ENCODE measurements at regions of chr11 and their contacts with region 1.

Region 1: DNA sequence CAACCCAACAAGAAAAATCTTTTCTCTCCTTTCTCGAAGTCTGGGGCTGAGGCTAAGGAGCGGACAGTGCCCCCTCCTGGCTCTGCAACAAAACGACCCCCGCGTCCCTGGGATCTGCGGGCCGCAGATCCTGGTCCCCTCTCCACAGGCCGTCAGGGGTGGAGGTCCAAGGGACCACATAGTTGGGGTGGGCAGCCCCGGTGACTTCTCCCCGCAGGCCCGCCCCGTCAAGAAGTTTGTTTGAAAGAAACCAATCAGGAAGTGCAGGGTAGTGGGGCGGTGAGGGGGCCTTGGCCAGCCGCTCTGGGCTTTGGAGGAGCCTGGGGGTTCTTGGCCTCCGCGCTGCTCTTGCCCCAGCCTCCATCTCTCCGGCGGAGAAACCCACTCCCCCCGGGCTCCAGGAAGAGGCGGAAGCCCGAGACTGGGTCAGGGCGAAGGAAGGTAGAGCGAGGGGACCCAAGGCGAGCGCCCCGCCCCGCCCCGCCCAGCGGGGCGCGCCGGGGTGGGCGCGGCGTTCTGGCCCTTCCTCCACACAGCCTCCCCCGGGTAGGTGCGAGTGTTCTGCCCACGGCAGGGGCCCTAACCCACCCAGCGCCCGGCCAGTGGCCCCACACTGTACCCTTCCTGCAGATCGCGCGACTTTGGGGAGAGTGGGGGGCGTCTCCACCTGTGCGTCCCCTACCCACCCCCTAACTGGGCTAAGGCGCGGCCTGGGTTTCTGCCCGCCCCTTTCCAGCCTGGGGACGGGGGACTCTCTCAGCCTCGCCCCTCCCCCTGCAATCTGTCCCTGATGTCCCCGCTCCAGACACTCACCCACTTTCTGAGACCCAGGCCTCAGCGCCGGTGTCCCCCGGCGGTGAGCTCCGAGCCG is 1.3 kb downstream of the TP53I11 start:
- DNase-seq: peak; percentile 49 to 72 (median 71)
- H3K4me3 ChIP-seq: peak overlapping the region; percentile 51 to 86 (median 75)
- H3K27ac ChIP-seq: no peak overlapping the region
- H3K4me1 ChIP-seq: peaks cover 0 to 30% (median 22%) of the 10 kb centered on the region in 4 experiments
- H3K27me3 ChIP-seq: peaks cover 0 to 4% (median 0%) of the 10 kb centered on the region in 5 experiments

Region 2: DNA sequence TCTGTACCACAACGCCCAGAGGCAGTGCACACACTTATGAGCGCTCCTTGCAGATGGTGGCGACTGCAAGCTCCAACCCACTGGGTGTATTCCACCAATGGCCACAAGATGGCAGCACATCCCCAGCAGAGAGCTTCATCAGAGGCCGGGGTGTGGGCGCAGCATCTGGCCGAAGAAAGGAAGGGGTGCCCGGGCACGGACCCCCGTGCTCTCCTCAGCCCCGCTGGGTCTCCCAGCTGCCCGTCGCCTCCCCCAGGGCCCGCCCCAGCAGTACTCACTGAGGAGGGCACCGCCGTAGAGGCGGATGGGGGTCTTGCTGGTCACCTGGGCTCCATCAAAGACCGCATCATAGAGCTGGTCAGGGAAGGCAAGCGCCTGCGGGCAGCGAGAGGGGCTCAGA is 12.9 kb before region 1 on chr11:
- CTCF ChIA-PET with region 1: interaction called, 52 read pairs
- POLR2A ChIA-PET with region 1: no interaction called
- DNase-seq: peak; percentile 79 to 90 (median 83)
- H3K4me3 ChIP-seq: no peak overlapping the region
- H3K27ac ChIP-seq: no peak overlapping the region
- H3K4me1 ChIP-seq: peaks cover 0 to 20% (median 13%) of the 10 kb centered on the region in 4 experiments
- H3K27me3 ChIP-seq: no peaks in the 10 kb centered on the region